Activated B cell treated with CpG ODN at 0.5 μM for 24 hours (primary cell): ENCODE measurements at regions of chr3 and their contacts with region 1.

Region 1: GRCh38 chr3:168047190-168047795 is 48.4 kb downstream of the GOLIM4 start:
- DNase-seq: no peak
- ATAC-seq: peak; percentile 76
- H3K4me3 Mint-ChIP-seq: no peak overlapping the region
- H3K27ac Mint-ChIP-seq: no peak overlapping the region
- H3K4me1 Mint-ChIP-seq: peaks cover 4% of the 10 kb centered on the region
- H3K27me3 Mint-ChIP-seq: no peaks in the 10 kb centered on the region
- CTCF ChIP-seq: peak; percentile 88

Region 2: GRCh38 chr3:167734498-167735232 is 312.6 kb before region 1 on chr3 and contains the start of gene PDCD10:
- CTCF ChIA-PET with region 1: no interaction called
- POLR2A ChIA-PET with region 1: no interaction called
- intact Hi-C with region 1: no loop called
- DNase-seq: peak; percentile 87
- ATAC-seq: peak; percentile 87
- H3K4me3 Mint-ChIP-seq: no peak within 1 kb of the TSS
- H3K27ac Mint-ChIP-seq: no peak within 1 kb of the TSS
- H3K4me1 Mint-ChIP-seq: peaks cover 27% of the 10 kb centered on the region
- H3K27me3 Mint-ChIP-seq: no peaks in the 10 kb centered on the region
- CTCF ChIP-seq: no peak
- total RNA-seq, gene PDCD10: 54.0 and 54.8 TPM in 2 replicates

Region 3: DNA sequence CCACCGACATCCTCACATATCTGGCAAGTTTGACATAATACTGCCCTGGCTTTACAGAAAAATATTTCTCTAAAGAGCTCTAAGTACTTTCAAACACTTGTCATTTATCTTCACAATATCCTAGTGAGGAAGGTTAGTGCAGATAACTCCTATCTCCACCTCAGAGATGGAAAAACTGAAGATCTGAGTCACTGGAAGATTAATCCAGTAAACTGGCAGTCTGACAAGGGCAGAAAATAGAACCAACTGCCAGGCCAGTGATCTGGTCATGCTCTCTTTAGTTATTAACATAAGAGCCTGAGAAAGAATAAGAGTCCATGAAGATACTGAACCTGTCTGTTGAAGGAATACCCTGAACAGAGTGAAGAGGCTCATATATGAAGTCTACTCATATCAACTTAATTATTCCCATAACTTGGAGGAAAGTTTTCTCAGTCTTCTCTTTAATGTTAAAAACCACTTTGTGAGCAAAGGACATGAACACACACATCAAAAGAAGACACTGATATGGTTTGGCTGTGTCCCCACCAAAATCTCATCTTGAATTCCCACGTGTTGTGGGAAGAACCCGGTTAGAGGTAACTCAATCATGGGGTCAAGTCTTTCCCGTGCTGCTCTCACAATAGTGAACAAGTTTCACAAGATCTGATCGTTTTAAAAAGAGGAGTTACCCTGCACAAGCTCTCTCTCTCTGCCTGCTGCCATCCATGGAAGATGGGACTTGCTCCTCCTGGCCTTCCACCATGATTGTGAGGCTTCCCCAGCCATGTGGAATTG is 13.0 kb before region 1 on chr3:
- CTCF ChIA-PET with region 1: no interaction called
- POLR2A ChIA-PET with region 1: no interaction called
- intact Hi-C with region 1: no loop called
- DNase-seq: no peak
- ATAC-seq: no peak
- H3K4me3 Mint-ChIP-seq: no peak overlapping the region
- H3K27ac Mint-ChIP-seq: no peak overlapping the region
- H3K4me1 Mint-ChIP-seq: no peaks in the 10 kb centered on the region
- H3K27me3 Mint-ChIP-seq: no peaks in the 10 kb centered on the region
- CTCF ChIP-seq: no peak

Region 4: GRCh38 chr3:168066882-168067281 is 19.6 kb after region 1 on chr3:
- CTCF ChIA-PET with region 1: interaction called, 5 read pairs
- POLR2A ChIA-PET with region 1: no interaction called
- intact Hi-C with region 1: loop called (anchors 2 kb)
- DNase-seq: no peak
- ATAC-seq: no peak
- H3K4me3 Mint-ChIP-seq: no peak overlapping the region
- H3K27ac Mint-ChIP-seq: no peak overlapping the region
- H3K4me1 Mint-ChIP-seq: peaks cover 19% of the 10 kb centered on the region
- H3K27me3 Mint-ChIP-seq: no peaks in the 10 kb centered on the region
- CTCF ChIP-seq: no peak

Region 5: DNA sequence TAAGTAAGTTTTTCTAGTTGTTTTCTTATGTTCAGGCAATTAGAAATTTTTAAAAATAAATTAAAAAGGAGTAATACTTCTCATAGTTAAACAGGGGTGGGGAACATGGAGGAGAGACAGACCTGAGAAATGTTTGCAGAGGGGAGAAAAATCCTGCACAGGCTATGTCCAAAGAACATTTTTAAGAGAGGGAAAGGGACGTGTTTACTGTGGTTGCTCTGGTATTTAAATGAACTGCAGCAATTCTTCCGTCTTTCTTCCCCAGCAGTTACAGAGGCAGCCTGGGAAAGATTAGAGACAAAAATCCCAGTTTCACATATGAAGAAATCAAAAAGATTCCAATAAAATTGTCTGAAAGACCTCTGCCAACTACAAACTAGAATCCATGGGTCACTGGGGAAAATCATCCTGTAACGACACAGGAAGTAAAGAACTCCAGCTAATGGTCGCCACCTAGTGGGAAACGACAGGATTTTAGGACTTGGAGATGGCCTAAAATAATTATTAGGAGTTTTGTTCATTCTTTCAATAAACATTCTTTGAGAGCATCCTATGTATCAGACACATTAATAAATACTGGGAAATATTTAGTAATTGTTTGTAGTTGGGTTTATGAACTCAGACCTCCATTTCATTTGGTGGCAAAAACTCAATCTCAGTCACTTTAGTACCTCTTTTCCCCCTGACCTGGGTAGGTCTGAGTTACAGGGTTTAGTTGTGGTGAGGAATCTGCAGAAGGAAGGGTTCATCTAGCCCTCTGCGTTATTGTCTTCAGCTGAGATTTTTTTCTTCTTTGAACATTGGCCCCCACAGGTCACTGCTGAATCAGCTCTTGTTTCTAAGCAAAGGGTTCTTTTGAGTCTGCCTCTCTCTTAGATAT is 118.3 kb after region 1 on chr3:
- CTCF ChIA-PET with region 1: interaction called, 116 read pairs
- POLR2A ChIA-PET with region 1: no interaction called
- intact Hi-C with region 1: loop called (anchors 1 kb)
- DNase-seq: no peak
- ATAC-seq: peak; percentile 68
- H3K4me3 Mint-ChIP-seq: peak overlapping the region; percentile 57
- H3K27ac Mint-ChIP-seq: no peak overlapping the region
- H3K4me1 Mint-ChIP-seq: peaks cover 6% of the 10 kb centered on the region
- H3K27me3 Mint-ChIP-seq: no peaks in the 10 kb centered on the region
- CTCF ChIP-seq: peak; percentile 26

Region 6: DNA sequence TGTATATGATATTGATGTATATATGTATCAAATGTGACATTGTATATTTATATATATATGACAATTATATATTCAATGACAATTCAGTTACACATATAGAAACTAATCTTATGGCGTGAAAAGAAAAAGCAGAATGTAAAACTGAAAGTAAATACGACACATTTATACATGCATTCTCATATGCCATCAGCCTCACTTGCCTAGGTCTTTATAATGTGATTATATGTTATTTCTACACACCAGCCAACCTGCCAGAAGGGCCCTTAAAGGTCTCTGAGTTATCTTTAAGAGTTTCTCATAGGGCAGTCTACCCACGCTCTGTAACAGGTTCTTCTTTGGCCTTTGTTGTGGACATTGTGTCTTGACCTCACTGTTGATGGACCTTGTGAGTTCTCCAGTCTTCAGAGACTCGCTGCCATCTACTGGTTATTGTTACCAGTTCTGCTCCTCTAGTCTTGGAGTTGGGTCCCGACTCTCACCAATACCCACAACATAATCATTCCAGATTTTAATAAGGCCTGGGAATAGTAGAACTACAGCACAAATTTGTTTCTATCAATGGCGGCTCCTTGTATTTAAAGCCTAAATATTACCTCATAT is 419.9 kb after region 1 on chr3:
- CTCF ChIA-PET with region 1: no interaction called
- POLR2A ChIA-PET with region 1: no interaction called
- intact Hi-C with region 1: loop called (anchors 1 kb)
- DNase-seq: no peak
- ATAC-seq: no peak
- H3K4me3 Mint-ChIP-seq: peak overlapping the region; percentile 20
- H3K27ac Mint-ChIP-seq: no peak overlapping the region
- H3K4me1 Mint-ChIP-seq: peaks cover 4% of the 10 kb centered on the region
- H3K27me3 Mint-ChIP-seq: no peaks in the 10 kb centered on the region
- CTCF ChIP-seq: no peak

Region 7: DNA sequence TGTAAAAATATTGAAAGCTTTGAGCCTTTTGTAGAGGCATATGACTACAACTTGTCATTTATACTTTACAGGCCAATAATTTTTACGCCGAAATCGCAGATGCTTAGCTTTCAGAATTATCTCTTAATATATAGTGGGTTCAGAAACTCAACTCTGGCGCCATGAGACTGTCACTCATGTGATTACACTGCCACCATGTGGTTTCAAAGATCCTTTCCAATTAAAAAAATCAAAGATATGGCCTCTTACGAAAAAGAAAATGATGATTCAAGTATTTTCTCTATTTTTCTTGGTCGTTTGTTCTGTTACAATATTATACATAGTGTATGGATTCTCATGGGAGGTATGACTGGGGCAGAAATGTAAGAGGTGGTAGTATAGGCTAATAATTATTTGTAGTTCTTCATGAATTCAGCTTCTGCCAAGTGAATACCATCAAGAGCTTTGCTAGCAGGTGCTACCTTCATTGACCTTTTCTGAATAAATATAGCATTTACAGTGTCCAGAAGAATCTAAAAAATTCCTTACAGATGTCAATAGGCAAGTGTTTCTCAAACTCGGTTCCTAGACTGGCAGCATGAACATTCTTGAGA is 800.1 kb after region 1 on chr3:
- CTCF ChIA-PET with region 1: interaction called, 4 read pairs
- POLR2A ChIA-PET with region 1: no interaction called
- intact Hi-C with region 1: loop called (anchors 1 kb)
- DNase-seq: no peak
- ATAC-seq: no peak
- H3K4me3 Mint-ChIP-seq: no peak overlapping the region
- H3K27ac Mint-ChIP-seq: no peak overlapping the region
- H3K4me1 Mint-ChIP-seq: no peaks in the 10 kb centered on the region
- H3K27me3 Mint-ChIP-seq: peaks cover 3% of the 10 kb centered on the region
- CTCF ChIP-seq: no peak

Region 8: DNA sequence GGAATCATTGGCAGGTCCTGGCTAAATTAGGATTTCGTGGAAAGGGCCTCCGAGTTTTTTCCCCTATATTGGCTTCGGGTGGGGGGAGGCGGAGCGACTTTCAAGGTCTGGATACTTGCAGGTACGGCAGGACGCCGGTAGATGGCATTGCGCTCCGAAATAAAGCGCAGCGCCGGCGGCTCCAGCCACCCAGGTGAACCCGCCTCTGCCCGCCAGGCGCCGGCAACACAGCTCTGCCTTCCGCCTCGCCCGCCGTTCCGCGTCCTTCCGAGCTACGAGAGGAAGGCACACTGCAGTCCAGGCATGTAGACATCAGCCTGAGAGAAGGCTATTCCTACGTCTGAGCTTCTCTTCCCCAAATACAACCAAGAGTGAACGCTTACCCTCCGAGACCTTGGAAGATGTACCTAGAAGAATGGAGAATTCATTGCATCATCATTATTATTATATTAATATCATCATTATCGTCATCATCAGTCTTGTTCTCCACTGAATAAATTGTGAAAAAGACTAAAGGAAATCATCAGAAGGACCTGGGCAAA is 1102.1 kb after region 1 on chr3:
- CTCF ChIA-PET with region 1: no interaction called
- POLR2A ChIA-PET with region 1: no interaction called
- intact Hi-C with region 1: loop called (anchors 2 kb)
- DNase-seq: peak; percentile 58
- ATAC-seq: peak; percentile 95
- H3K4me3 Mint-ChIP-seq: peak overlapping the region; percentile 53
- H3K27ac Mint-ChIP-seq: no peak overlapping the region
- H3K4me1 Mint-ChIP-seq: peaks cover 23% of the 10 kb centered on the region
- H3K27me3 Mint-ChIP-seq: peaks cover 49% of the 10 kb centered on the region
- CTCF ChIP-seq: no peak

Region 9: GRCh38 chr3:169744366-169745054 is 1697.2 kb after region 1 on chr3:
- CTCF ChIA-PET with region 1: no interaction called
- POLR2A ChIA-PET with region 1: no interaction called
- intact Hi-C with region 1: loop called (anchors 1 kb)
- DNase-seq: no peak
- ATAC-seq: no peak
- H3K4me3 Mint-ChIP-seq: no peak overlapping the region
- H3K27ac Mint-ChIP-seq: no peak overlapping the region
- H3K4me1 Mint-ChIP-seq: no peaks in the 10 kb centered on the region
- H3K27me3 Mint-ChIP-seq: peaks cover 17% of the 10 kb centered on the region
- CTCF ChIP-seq: no peak